Ovary (tissue), 10 donors: ENCODE measurements at regions of chr10 and their contacts with region 1.

Region 1: GRCh38 chr10:129184196-129184595 is 282.8 kb upstream of the MGMT start:
- DNase-seq: no peak
- H3K4me3 ChIP-seq: no peak overlapping the region
- H3K27ac ChIP-seq: no peak overlapping the region
- H3K4me1 ChIP-seq: no peaks in the 10 kb centered on the region
- H3K27me3 ChIP-seq: no peaks in the 10 kb centered on the region
- CTCF ChIP-seq: no peak
- EP300 ChIP-seq: no peak
- POLR2A ChIP-seq: no peak

Region 2: DNA sequence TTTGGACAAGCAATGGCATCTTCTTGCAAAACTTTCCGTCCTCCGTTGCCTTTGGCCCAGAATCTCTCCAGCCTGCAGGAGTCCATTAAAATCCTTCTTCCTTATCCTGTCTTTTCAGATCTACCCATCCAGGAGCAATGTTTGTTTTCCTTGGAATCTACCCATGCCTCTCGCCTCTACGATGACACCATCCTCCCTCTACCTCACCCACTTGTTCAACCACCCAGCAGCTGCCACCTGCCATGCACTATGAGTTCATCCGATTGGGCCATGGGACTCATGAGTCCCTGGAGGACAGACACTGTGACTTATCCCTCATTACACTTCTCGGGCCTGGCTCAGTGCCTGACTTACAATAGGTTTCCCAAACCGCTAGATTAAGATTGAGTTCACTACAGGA is 256.1 kb after region 1 on chr10:
- intact Hi-C with region 1: loop called in 1 of 4 experiments (anchors 5 kb)
- DNase-seq: no peak
- H3K4me3 ChIP-seq: no peak overlapping the region
- H3K27ac ChIP-seq: no peak overlapping the region
- H3K4me1 ChIP-seq: no peaks in the 10 kb centered on the region
- H3K27me3 ChIP-seq: no peaks in the 10 kb centered on the region
- CTCF ChIP-seq: no peak
- EP300 ChIP-seq: no peak
- POLR2A ChIP-seq: no peak